GM18951 (cell line): ENCODE measurements at regions of chrX and their contacts with region 1.

Region 1: DNA sequence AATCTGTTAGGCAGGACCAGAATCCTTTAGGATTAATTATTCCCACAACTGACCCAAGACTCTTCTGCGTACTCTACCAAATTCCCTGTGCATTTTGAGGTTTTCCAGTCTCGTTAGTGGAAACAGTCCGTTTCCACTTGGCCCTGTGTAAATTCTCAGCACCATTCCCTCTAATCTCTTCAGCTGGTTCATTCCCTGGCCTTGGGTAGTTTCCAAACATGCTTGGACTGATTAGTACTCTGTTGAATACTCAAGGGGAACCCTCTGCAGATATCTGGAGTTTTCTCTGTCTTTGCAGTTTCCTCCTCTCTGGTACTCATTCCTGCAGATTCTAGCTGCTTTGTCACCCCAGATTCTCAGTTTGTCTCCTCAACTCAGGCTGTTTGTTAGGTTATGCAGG is 80.4 kb downstream of the ZFX start:
- POLR2A ChIP-seq: no peak

Region 2: DNA sequence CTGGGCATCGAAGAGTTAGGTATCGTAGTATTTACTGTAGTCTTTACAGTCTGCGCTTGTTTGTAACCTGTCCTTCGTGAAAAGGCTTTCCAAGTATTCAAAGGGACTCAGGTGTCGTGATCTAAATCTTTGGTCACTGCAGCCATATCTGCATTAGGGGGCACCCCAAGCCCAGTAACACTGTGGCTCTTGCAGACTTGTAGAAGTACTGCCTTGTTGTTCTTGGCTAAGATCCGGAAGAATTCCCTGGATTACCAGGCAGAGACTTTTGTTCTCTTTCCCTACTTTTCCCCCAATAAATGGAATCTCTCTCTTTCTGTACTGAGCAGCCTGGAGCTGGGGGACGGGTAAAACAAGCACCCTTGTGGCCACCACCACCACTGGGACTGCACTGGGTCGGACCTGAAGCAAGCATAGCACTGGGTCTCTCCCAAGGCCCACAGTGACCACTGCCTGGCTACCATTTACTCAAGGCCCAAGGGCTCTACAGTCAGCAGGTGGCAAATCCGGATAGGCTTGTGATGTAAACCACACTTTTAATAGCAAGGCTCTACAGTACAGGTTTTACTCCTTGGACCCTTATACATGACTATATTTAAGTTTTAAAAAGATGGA is 310.2 kb before region 1 on chrX:
- in situ Hi-C with region 1: loop called (anchors 10 kb)
- POLR2A ChIP-seq: no peak